PC-9 (cell line): ENCODE measurements at regions of chr10 and their contacts with region 1.

Region 1: DNA sequence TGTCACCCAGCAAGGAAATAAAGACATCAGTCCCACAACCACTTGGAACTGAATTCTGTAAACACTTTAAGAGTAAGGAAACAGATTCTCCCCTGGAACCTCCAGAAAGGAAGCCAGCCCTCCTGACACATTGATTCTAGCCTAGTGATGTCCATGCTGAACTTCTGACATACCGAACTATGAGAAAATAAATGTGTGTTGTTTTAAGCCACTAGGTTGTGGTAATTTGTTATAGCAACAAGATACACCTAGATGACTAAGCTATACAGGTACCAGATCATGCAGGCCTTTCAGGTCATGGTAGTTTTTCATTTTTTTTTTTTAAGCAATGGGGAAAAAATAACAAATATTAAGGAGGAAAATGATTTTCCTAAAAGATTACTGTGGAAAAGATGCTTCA is 37.6 kb upstream of the LRRTM3 start:
- DNase-seq: no peak
- H3K4me3 ChIP-seq: no peak overlapping the region
- H3K27ac ChIP-seq: no peak overlapping the region
- H3K4me1 ChIP-seq: no peaks in the 10 kb centered on the region
- H3K27me3 ChIP-seq: no peaks in the 10 kb centered on the region
- CTCF ChIP-seq: no peak

Region 2: DNA sequence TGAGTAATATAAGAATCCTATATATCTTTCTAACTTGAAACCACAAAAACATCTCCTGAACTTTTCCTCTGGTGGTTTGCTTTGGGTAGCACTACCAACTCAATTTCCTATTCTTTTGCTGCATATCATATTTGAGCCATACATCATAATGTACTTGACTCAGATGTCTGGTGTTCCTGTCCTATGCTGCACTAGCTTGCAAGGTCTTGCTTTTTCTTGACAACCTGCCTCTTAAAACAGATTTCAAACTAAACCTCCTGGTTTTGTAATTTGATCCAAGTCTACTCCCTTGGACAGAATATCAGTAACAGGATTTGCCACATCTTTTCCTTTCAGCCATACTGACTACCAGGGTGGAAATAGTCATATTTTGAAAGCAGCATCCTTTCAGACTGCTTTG is 482.7 kb before region 1 on chr10:
- CTCF ChIA-PET with region 1: no interaction called
- POLR2A ChIA-PET with region 1: interaction called, 14 read pairs
- intact Hi-C with region 1: no loop called
- DNase-seq: no peak
- H3K4me3 ChIP-seq: no peak overlapping the region
- H3K27ac ChIP-seq: no peak overlapping the region
- H3K4me1 ChIP-seq: no peaks in the 10 kb centered on the region
- H3K27me3 ChIP-seq: no peaks in the 10 kb centered on the region
- CTCF ChIP-seq: no peak

Region 3: DNA sequence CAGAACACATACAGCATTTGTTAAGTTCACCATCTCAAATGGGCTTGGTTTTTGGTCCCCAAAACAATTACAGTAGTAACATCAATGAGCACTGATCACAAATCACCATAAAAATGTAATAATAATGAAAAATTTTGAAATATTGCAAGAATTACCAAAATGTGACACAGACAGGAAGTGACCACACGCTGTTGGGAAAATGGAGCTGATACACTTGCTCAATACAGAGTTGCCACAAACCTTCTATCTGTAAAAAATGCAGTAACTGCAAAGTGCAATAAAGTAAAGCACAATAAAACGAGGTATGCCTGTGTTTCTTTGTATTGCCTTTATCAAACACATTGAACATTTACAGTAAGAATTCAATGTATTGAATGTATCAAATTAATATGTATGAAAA is 545.0 kb after region 1 on chr10:
- CTCF ChIA-PET with region 1: no interaction called
- POLR2A ChIA-PET with region 1: no interaction called
- intact Hi-C with region 1: loop called (anchors 5 kb)
- DNase-seq: no peak
- H3K4me3 ChIP-seq: no peak overlapping the region
- H3K27ac ChIP-seq: no peak overlapping the region
- H3K4me1 ChIP-seq: no peaks in the 10 kb centered on the region
- H3K27me3 ChIP-seq: no peaks in the 10 kb centered on the region
- CTCF ChIP-seq: no peak